ENCODE measurements at regions of chr6 and their contacts with region 1.

Region 1: GRCh38 chr6:13916230-13916944 is 8.4 kb upstream of the RNF182 start:
- DNase-seq: no peak

Region 2: DNA sequence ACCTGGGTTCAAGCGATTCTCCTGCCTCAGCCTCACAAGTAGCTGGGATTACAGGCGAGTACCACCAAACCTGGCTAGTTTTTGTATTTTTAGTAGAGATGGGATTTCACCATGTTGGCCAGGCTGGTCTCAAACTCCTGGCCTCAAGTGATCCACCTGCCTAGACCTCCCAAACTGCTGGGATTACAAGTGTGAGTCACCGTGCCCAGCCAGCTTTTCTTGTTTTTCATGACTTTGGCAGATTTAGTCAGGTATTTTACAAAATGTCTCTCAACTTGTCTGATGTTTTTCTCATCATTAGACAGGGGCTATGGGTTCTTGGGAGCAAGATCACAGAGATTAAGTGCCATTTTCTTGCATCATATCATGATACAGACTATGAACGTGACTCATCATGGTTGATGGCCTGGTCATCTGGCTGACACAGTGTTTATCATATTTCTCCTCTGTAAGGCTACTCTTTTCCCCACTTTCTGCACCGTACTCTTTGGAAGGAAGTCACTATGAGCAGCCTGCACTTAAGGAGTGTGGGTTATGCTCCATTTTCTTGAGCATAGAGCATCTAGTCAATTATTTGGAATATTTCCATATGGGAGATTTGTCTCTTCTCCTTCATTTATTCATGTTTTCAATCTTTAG is 76.1 kb after region 1 on chr6:
- intact Hi-C with region 1: no loop called
- DNase-seq: no peak

Region 3: DNA sequence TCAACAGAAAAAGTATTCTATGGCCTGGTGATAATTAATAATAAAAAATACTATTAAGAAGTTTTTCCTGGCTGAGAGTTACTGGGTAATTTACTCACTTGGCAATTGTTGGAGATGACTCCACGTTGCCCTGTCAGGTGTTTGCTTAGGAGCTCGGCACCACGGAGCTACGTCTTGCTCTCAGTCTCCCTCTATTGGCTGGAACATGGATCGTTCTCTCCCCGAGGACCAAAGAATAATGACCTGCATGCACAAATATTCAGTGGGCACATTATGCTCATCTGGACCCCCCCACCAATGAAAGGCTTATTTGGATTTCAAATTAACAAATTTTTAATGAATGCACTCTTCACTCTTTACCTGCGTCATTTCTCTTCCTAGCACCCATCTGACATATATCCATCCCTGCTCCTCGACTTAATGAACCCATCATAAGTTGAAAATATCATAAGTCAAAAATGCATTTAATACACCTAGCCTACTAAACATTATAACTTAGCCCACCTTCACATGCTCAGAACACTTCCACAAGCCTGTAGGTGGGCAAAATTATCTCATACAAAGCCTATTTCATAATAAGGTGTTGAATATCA is 130.2 kb after region 1 on chr6:
- intact Hi-C with region 1: loop called in 1 of 2 experiments (anchors 10 kb)
- DNase-seq: no peak

Measured in posterior vena cava (tissue), 2 donors.